Calu3 (cell line): ENCODE measurements at regions of chr1 and their contacts with region 1.

Region 1: GRCh38 chr1:204941421-204942338 is 71.0 kb downstream of the NFASC start:
- DNase-seq: peak; percentile 75
- H3K4me3 Mint-ChIP-seq: no peak overlapping the region
- H3K27ac Mint-ChIP-seq: no peak overlapping the region
- H3K4me1 Mint-ChIP-seq: no peaks in the 10 kb centered on the region
- H3K27me3 Mint-ChIP-seq: peaks cover 9% of the 10 kb centered on the region
- CTCF ChIP-seq: peak; percentile 80

Region 2: GRCh38 chr1:204828338-204828850 is 113.3 kb before region 1 on chr1:
- CTCF ChIA-PET with region 1: interaction called, 5 read pairs
- intact Hi-C with region 1: loop called (anchors 5 kb)
- DNase-seq: peak; percentile 60
- H3K4me3 Mint-ChIP-seq: no peak overlapping the region
- H3K27ac Mint-ChIP-seq: no peak overlapping the region
- H3K4me1 Mint-ChIP-seq: no peaks in the 10 kb centered on the region
- H3K27me3 Mint-ChIP-seq: peaks cover 94% of the 10 kb centered on the region
- CTCF ChIP-seq: no peak

Region 3: DNA sequence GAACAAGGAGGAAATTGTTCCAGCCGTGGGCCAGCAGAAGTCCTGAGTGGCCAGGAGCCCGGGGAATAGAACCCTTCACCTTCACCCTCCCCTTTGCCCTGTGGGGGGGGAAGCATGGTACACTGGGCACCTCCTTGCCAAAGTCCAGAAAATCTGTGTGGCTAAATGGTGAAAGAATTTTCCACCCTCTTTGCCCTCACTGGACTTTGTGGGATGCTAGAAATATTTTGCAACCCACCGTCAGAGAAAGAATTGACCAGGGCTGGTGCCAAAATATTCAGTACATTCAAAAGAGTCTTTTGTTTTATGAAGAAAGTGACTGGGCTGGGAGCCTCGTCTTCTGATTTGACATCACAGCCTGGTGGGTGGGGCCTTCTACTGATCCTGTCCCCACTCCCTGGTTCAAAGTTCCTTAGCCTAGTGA is 56.4 kb before region 1 on chr1:
- CTCF ChIA-PET with region 1: no interaction called
- intact Hi-C with region 1: no loop called
- DNase-seq: peak; percentile 22
- H3K4me3 Mint-ChIP-seq: no peak overlapping the region
- H3K27ac Mint-ChIP-seq: no peak overlapping the region
- H3K4me1 Mint-ChIP-seq: no peaks in the 10 kb centered on the region
- H3K27me3 Mint-ChIP-seq: peaks cover 61% of the 10 kb centered on the region
- CTCF ChIP-seq: no peak

Region 4: DNA sequence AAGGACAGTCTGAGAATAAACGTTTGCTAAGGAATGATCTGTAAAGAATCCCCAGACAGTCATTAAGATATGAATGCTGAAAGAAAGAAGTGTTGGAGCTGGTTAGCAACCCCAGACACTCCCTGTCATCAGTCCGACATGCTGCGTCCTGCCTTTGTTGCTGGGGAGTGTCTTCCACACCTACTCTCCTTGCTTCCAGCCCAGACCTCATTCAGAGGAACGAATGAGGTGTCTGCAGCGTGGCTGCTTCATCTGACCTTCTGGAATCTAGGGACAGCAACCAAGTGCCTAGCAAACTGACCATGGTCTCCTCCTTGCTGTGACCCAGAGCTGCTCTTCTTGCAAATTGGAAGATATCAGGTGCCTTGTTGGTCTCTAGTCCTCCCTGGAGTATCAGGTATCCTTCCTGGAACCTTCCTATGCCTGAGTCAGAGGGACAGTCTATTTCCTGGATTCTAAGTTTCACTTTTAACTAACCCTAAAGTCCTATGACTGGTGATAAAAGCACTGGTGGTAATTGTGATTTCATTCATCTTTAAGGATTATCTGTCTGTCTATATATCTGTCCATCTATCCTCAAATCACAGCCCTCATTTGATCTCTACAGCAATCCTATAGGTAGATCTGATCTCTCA is 25.7 kb before region 1 on chr1:
- CTCF ChIA-PET with region 1: no interaction called
- intact Hi-C with region 1: no loop called
- DNase-seq: no peak
- H3K4me3 Mint-ChIP-seq: no peak overlapping the region
- H3K27ac Mint-ChIP-seq: no peak overlapping the region
- H3K4me1 Mint-ChIP-seq: peaks cover 10% of the 10 kb centered on the region
- H3K27me3 Mint-ChIP-seq: peaks cover 35% of the 10 kb centered on the region
- CTCF ChIP-seq: no peak

Region 5: DNA sequence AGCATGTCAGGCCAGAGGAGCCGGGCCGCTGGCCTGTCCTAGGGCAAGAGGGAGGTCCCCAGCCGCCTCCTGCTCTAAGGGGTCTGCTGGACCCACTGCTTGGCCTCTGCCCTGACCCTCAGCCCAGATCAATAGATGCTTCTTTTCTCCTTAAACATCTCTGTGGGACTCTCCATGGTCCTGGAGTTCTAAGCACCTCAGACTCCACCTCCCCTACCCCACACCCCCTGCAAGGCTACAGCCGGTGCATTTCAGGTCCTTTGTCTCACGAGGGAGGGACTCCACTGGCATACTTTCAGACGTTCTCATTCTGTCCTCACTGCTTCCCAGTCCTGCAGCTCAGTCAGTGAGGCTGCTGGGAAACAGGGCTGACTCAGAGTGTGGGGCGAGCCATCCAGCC is 112.3 kb after region 1 on chr1:
- CTCF ChIA-PET with region 1: no interaction called
- intact Hi-C with region 1: no loop called
- DNase-seq: no peak
- H3K4me3 Mint-ChIP-seq: no peak overlapping the region
- H3K27ac Mint-ChIP-seq: no peak overlapping the region
- H3K4me1 Mint-ChIP-seq: no peaks in the 10 kb centered on the region
- H3K27me3 Mint-ChIP-seq: peaks cover 100% of the 10 kb centered on the region
- CTCF ChIP-seq: no peak